ENCODE measurements at regions of chr12 and their contacts with region 1.

Region 1: DNA sequence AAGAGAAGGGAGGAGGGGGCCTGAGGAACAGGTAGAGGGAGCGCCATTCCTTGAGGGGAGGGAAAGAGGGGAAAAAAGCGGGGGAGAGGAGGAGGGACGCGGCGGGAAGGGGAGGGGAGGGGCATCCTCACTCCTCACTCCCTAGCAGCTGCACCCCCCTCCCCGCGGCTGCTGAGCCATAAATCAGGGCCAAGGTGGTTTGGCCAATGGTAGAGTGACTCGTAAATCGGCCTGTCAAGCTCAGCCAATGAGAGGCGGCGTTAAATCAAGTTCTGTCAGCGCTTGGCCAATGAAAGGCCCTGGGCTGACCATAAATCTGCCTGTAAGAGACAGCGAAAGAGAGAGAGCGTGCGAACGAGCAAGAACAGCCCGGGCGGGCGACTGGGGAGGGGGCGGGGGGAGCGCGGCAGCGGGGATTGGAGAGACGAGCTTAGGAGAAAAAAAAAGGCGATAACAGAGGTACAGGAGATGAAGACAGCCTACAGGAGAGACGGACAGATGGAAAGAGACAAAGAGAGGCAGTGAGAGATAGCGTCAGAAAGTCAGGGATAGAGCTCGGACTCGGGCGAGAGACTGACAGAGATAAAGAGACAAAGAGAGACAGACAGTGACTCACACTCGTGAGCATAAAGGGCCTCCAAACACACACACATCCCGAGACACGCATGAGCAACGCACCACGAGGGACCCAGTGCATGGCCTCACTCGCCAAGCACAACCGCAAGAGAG is 5.1 kb downstream of the GPR84 start:
- DNase-seq: peak; percentile 92 to 99 (median 98)
- H3K4me3 ChIP-seq: peak overlapping the region; percentile 53 to 84 (median 70)
- H3K27ac ChIP-seq: peak overlapping the region; percentile 85 to 99 (median 96)
- H3K27me3 ChIP-seq: no peaks in the 10 kb centered on the region
- CTCF ChIP-seq: peak in 19 of 56 donors; percentile 5 to 46 (median 27)

Region 2: DNA sequence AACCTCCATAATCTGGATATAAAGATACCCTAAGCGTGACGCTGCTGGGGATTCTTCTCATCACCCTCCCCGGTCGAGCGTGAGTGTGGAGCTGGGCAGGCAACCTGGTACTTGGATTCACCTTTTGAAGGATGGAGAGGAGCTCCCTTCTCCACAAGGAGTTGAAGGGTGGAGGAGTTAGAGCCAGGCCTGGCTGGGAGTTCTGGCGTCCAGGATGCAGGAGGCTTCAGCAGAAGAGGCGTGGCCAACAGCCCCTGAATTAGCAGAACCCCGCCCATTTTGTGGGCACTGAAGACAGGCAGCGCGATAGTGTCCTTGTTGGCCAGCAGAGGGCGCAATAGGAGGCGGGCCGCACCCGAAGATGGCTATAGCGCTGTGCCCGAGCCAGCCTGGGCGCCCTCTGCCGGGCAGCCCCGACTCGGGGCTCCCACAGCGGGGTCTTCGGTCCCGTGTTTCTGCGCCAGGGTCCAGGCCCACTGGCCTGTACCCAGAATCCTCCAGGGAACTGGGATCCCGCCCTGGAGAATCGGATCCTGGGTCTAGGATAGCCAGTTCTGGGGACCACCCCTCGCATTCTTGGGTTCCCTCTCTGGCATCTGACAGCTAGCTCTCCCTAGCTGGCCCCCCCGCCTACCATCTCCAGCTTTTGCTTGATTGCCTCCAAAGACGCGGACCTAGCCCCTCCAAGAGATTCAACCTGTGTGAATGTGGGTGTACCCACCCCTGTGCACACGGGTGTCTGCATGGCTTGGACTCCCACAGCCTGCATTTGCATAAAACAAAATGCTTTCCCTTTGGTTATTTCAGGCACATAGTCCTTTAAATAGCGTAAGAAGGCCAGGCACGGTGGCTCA is 144.4 kb before region 1 on chr12:
- intact Hi-C with region 1: loop called in 1 of 2 experiments (anchors 2 kb)
- DNase-seq: peak; percentile 67 to 90 (median 83)
- H3K4me3 ChIP-seq: peak overlapping the region in 48 of 59 donors; percentile 5 to 57 (median 40)
- H3K27ac ChIP-seq: peak overlapping the region in 3 of 59 donors; percentile 10 to 68 (median 27)
- H3K27me3 ChIP-seq: peaks cover 0 to 20% (median 0%) of the 10 kb centered on the region in 45 donors
- CTCF ChIP-seq: peak; percentile 66 to 100 (median 99)

Region 3: GRCh38 chr12:54279866-54280467 is 79.2 kb before region 1 on chr12 and contains the start of gene CBX5:
- intact Hi-C with region 1: loop called in 1 of 2 experiments (anchors 1 kb)
- DNase-seq: peak; percentile 88 to 97 (median 94)
- H3K4me3 ChIP-seq: peak within 1 kb of the TSS; percentile 59 to 99 (median 85)
- H3K27ac ChIP-seq: peak within 1 kb of the TSS; percentile 86 to 100 (median 98)
- H3K27me3 ChIP-seq: no peaks in the 10 kb centered on the region
- CTCF ChIP-seq: peak in 5 of 56 donors; percentile 2 to 7 (median 5)
- total RNA-seq, gene CBX5: 82.3 to 164 (median 125) TPM

Region 4: DNA sequence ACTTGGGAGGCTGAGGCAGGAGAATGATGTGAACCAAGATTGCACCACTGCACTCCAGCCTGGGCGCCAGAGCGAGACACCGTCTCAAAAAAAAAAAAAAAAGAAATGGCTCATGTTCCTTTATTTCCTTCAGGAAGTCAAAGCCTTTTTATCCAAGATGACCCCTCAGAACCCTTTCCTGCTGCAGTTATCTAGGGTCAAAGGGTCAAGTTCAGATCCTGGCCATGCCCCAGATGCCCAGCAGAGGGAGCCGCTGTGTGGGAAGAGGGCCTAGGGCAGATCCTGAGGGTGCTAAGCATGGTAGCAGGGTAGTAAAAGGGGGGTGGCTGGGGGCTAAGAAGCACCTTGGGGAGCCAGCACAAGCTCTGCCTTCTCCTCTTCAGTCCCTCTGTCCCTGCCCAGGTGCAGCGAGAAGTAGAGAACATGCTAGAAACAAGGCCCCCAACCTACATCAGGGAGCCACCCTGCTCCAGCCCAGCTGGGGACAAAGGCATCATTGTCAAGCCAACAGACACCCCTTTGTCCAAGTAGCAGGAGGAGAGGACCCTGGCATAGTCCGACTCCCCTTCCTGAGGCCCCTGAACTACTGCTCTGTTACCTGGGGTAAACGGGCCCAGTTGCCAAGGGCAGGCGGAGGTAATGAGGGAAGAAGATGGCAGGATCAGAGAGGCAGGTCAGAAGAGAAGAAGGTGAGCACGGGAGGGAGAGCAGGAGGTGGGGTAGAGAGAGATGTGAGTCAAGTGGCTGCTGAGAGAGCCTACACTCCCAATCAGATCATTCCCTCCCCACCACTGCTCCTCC is 64.8 kb before region 1 on chr12:
- intact Hi-C with region 1: loop called in 1 of 2 experiments (anchors 5 kb)
- DNase-seq: peak in 7 of 10 donors; percentile 16 to 71 (median 52)
- H3K4me3 ChIP-seq: peak overlapping the region in 5 of 59 donors; percentile 4 to 20 (median 7)
- H3K27ac ChIP-seq: peak overlapping the region in 57 of 59 donors; percentile 16 to 93 (median 76)
- H3K27me3 ChIP-seq: peaks cover 0 to 15% (median 3%) of the 10 kb centered on the region in 45 donors
- CTCF ChIP-seq: peak in 55 of 56 donors; percentile 43 to 86 (median 67)

Region 5: DNA sequence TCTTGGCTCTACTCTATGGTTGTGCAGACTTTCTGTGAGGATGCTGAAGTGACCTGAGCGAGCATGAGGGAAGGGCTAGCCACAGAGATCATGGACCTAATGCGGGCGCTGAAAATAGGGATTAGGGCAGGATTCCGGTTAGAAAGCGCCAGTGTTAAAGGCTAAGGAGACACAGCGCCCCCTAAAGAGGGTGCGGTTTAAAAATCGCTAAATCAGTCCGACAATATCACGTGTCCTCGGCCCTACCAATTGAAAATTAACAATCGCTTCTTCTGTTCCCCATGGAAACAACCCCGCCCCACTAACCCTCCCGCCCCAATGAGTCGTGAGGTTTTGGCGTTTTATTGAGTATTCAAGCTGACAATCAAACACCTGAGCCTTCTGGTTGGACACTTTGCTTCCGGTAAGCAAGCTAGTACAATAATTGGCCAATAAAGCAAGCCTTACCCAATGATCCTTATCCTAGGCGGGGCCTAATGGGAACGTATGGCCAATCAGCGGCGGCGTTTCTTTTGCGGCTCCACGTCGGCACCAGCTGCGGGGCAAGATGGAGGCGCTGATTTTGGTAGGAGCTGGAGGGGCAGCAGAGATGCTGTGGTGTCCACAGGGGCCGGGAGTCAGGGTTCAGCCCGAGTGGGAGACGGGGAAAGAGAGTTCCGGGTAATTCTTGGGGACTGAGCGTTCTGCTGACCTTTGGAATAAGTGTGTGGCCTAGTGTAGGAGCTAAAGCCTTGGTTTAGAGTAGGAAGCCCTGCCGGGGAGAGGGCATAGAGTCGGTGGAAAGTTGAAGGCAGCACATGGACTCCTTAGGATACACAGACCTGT is 34.4 kb before region 1 on chr12 and contains the start of gene COPZ1:
- intact Hi-C with region 1: loop called (anchors 2 kb)
- DNase-seq: peak; percentile 91 to 96 (median 94)
- H3K4me3 ChIP-seq: peak within 1 kb of the TSS; percentile 56 to 99 (median 85)
- H3K27ac ChIP-seq: peak within 1 kb of the TSS; percentile 18 to 95 (median 88)
- H3K27me3 ChIP-seq: no peaks in the 10 kb centered on the region
- CTCF ChIP-seq: peak; percentile 68 to 93 (median 84)
- total RNA-seq, gene COPZ1: 56.8 to 104 (median 78.9) TPM

Region 6: GRCh38 chr12:54475537-54475936 is 116.3 kb after region 1 on chr12:
- intact Hi-C with region 1: no loop called
- DNase-seq: no peak
- H3K4me3 ChIP-seq: no peak overlapping the region
- H3K27ac ChIP-seq: no peak overlapping the region
- H3K27me3 ChIP-seq: peaks cover 0 to 11% (median 0%) of the 10 kb centered on the region in 45 donors
- CTCF ChIP-seq: no peak

Region 7: GRCh38 chr12:54795644-54796043 is 436.4 kb after region 1 on chr12:
- intact Hi-C with region 1: no loop called
- DNase-seq: no peak
- H3K4me3 ChIP-seq: no peak overlapping the region
- H3K27ac ChIP-seq: no peak overlapping the region
- H3K27me3 ChIP-seq: no peaks in the 10 kb centered on the region
- CTCF ChIP-seq: no peak